ENCODE measurements at regions of chr9 and their contacts with region 1.

Region 1: GRCh38 chr9:34500623-34501267 is 22.0 kb downstream of the ENHO start:
- DNase-seq: peak; percentile 48
- H3K4me3 ChIP-seq: no peak overlapping the region
- H3K27ac ChIP-seq: no peak overlapping the region
- H3K4me1 ChIP-seq: peaks cover 15% of the 10 kb centered on the region
- H3K27me3 ChIP-seq: peaks cover under 1% of the 10 kb centered on the region
- CTCF ChIP-seq: peak; percentile 99

Region 2: DNA sequence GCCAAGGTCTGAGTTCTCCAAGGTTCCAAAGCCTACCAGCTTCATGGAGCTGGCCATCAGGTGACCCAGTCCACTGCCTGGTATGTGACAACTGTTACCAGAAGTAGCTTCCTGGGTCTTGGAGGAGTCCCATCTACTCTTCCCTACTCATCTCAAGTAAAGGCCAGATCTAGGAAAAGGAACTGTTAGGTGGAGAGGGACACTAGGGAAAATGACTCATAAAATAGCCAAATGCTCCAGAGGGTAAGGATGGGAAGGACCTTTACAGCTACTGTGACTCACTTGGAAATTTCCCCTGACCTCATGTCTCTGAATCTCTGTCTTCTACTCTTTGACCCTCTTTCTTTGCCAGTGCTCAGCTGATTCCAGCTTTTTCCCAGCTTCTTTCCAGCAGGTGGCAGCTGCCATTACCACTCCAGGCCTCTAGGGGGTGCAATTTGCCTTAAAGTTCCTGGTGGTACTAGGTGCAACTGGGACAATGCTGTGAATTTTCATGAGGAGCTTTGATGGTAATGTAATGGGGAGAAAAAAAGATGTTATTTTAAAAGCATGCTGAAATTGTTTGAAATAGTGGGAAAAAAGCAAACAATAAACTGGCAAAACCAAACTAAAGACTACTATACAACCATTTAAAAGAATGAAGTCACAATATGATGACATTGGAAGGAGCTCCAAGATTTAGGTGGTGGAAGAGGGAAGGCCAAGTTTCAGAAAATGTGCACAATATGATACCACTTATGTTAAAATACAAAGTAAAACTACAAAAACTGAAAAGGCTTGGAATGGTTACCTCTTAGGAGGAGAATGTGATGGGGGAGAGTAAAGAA is 97.0 kb before region 1 on chr9:
- intact Hi-C with region 1: loop called (anchors 10 kb)
- DNase-seq: peak; percentile 59
- H3K4me3 ChIP-seq: no peak overlapping the region
- H3K27ac ChIP-seq: no peak overlapping the region
- H3K4me1 ChIP-seq: peaks cover 5% of the 10 kb centered on the region
- H3K27me3 ChIP-seq: no peaks in the 10 kb centered on the region
- CTCF ChIP-seq: peak; percentile 96

Region 3: DNA sequence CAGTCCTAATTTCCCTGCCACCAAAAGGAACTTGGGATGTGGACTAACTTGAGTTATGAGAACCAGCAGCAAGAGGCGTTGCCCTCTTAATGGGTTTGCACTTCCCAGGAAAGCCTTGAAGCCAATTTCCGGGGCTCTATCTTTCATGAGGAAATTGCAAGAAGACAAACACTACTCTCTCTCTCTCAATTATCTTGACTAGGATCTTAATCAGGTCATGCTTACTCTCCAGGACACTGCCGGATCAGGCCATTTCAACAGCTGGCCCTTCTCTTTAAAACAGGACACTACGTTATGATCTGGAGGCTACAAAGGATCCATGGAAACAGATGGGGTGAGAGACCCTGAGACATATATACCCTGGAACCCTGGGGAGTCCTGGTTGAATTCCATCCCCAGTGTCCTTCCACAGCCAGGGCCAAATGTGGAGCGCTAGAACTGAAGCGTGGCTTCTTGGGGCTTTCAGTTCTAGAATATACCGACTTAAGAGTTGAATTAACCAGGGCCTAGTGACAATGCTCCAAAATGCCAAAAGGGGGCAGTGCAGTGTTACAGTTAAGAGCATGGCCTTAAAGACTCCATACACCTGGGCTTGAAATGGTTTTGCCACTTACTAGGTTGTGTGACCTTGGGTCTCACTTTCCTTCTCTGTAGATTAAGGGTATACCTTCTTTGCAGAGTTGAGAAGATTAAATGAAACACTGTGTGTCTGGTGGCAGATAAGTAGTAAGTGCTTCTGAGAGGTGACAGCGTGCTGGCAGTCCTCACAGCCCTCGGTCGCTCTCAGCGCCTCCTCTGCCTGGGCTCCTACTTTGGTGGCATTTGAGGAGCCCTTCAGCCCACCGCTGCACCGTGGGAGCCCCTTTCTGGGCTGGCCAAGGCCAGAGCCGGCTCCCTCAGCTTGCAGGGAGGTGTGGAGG is 63.5 kb before region 1 on chr9:
- intact Hi-C with region 1: loop called (anchors 5 kb)
- DNase-seq: peak; percentile 24
- H3K4me3 ChIP-seq: no peak overlapping the region
- H3K27ac ChIP-seq: peak overlapping the region; percentile 13
- H3K4me1 ChIP-seq: peaks cover 50% of the 10 kb centered on the region
- H3K27me3 ChIP-seq: no peaks in the 10 kb centered on the region
- CTCF ChIP-seq: peak; percentile 85